Tibial artery (tissue), 4 donors: ENCODE measurements at regions of chr13 and their contacts with region 1.

Region 1: DNA sequence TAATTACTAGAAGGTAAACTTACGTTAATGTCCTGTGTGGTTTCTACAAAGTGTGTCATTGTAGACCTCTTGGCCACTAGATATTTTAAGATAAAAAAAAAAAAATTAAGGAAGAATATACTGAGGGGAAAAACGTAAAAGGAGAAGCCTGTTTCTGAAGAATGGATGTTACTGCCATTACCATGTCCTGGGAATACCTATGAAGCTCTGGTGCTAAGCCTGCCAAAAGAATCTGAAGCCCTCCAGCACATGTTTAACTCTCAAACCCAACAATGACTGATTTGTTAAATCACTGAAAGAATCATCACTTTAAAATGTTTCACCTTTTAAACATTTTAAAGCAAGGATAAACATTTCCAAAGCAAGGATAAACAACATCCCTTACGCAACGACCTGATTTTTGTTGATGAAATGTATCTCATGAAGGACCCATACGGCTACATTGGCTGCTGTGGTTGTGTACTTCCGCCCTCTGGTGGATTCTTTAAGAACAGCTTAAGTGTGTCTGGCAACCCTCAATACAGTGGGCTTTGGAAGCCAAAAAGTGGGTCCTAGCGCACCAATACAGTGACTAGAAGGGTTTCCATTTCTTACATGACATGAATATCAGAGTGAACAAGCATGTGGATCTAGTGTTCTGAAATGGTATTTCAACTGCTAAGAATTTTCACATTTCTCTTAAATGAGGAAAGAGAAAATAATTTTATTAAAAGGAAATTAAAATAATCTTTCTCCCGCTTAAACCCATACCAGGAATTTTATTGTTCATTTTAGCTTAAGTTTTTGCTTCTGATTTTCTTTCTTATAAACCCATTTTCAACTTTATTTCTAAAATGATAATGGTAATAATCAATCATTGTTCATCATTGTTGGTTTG is 74.5 kb upstream of the RAP2A start:
- DNase-seq: peak in 1 of 2 donors; percentile 48
- H3K4me3 ChIP-seq: no peak overlapping the region
- H3K27ac ChIP-seq: peak overlapping the region in 1 of 2 donors; percentile 10
- H3K4me1 ChIP-seq: peaks cover 0 to 27% (median 2%) of the 10 kb centered on the region in 4 donors
- H3K27me3 ChIP-seq: no peaks in the 10 kb centered on the region
- CTCF ChIP-seq: peak; percentile 82 to 84

Region 2: DNA sequence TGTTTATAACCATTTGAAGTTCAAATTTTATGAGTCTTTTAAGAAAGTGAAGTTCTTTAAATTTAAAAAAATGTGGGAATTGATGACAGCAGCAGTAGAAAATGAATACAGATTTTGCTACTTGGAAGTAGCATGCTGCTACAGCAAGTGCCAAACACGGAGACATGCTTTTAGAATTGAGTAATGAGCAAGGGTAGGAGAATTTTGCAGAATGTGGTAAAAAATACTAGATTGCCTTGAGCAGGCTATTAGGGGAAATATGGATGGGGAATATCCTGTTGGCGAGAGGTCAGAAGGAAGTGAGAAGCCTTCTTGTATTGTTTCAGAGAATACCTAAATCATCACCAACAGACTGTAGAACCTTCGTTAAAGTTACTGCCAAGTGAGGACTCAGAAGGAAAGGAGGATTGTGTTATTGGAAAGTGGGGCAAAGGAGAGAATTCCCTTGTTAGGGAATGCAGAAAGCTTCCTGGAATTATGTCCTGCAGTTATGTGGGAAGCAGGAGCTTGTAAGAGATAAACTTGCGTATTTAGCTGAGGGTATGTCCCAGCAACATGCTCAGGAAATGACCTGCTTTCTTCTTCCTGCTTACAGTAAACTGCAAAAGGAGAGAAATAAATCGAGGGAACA is 332.8 kb before region 1 on chr13:
- intact Hi-C with region 1: loop called (anchors 10 kb)
- DNase-seq: no peak
- H3K4me3 ChIP-seq: no peak overlapping the region
- H3K27ac ChIP-seq: no peak overlapping the region
- H3K4me1 ChIP-seq: peaks cover 0 to 8% (median 0%) of the 10 kb centered on the region in 4 donors
- H3K27me3 ChIP-seq: no peaks in the 10 kb centered on the region
- CTCF ChIP-seq: no peak

Region 3: DNA sequence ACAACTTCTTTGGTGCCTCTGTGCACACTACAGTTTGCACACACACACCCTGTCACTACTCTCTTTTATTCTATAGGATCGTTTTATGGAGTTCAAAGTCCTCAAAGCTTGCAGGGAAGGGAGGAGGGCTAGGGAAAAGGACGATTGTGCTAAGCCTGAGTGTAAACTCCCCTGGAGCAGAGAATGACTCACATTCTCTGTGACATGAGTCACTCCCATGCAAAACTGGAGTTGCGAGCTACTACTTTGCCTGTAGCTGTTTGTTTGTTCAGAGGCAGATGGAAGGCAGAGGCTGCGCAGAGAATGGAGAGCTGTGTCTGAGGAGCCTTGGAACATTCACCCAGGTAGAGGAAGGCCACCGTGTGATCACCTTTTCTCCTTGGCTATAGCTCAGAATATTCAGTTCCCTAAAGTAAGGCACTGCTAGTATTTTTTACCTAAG is 217.8 kb before region 1 on chr13:
- intact Hi-C with region 1: no loop called
- DNase-seq: peak in 1 of 2 donors; percentile 34
- H3K4me3 ChIP-seq: no peak overlapping the region
- H3K27ac ChIP-seq: no peak overlapping the region
- H3K4me1 ChIP-seq: peaks cover 0 to 17% (median 7%) of the 10 kb centered on the region in 4 donors
- H3K27me3 ChIP-seq: no peaks in the 10 kb centered on the region
- CTCF ChIP-seq: no peak

Region 4: DNA sequence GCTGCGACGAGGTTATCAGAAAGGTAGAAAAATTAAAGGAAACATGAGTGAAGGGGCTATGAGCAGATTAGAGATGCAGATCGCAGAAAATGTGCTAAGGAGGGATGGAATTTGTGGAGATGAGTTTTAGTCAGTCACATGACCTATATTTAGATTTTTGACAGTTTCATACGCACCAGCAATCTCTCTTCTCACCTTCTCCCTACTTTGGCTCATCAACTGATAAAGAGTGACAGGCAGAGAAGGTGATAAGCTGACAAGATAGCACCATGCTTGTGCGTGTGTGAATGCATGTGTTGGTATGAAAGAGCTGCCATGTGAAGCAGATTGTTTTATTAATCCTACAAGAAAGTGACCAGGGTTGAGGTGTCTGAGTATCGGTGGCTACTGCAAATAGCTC is 327.2 kb after region 1 on chr13:
- intact Hi-C with region 1: no loop called
- DNase-seq: no peak
- H3K4me3 ChIP-seq: no peak overlapping the region
- H3K27ac ChIP-seq: no peak overlapping the region
- H3K4me1 ChIP-seq: no peaks in the 10 kb centered on the region
- H3K27me3 ChIP-seq: no peaks in the 10 kb centered on the region
- CTCF ChIP-seq: no peak